Activated B cell treated with CpG ODN at 0.5 μM for 24 hours (primary cell): ENCODE measurements at regions of chr2 and their contacts with region 1.

Region 1: GRCh38 chr2:68715353-68716041 is 19.1 kb upstream of the ARHGAP25 start:
- DNase-seq: no peak
- ATAC-seq: peak; percentile 51
- H3K4me3 Mint-ChIP-seq: peak overlapping the region; percentile 21
- H3K27ac Mint-ChIP-seq: peak overlapping the region; percentile 89
- H3K4me1 Mint-ChIP-seq: peaks cover 82% of the 10 kb centered on the region
- H3K27me3 Mint-ChIP-seq: no peaks in the 10 kb centered on the region
- CTCF ChIP-seq: no peak

Region 2: GRCh38 chr2:68689553-68690537 is 25.7 kb before region 1 on chr2:
- CTCF ChIA-PET with region 1: interaction called, 3 read pairs
- POLR2A ChIA-PET with region 1: interaction called, 6 read pairs
- intact Hi-C with region 1: loop called (anchors 1 kb)
- DNase-seq: no peak
- ATAC-seq: peak; percentile 79
- H3K4me3 Mint-ChIP-seq: peak overlapping the region; percentile 59
- H3K27ac Mint-ChIP-seq: peak overlapping the region; percentile 91
- H3K4me1 Mint-ChIP-seq: peaks cover 40% of the 10 kb centered on the region
- H3K27me3 Mint-ChIP-seq: no peaks in the 10 kb centered on the region
- CTCF ChIP-seq: no peak

Region 3: DNA sequence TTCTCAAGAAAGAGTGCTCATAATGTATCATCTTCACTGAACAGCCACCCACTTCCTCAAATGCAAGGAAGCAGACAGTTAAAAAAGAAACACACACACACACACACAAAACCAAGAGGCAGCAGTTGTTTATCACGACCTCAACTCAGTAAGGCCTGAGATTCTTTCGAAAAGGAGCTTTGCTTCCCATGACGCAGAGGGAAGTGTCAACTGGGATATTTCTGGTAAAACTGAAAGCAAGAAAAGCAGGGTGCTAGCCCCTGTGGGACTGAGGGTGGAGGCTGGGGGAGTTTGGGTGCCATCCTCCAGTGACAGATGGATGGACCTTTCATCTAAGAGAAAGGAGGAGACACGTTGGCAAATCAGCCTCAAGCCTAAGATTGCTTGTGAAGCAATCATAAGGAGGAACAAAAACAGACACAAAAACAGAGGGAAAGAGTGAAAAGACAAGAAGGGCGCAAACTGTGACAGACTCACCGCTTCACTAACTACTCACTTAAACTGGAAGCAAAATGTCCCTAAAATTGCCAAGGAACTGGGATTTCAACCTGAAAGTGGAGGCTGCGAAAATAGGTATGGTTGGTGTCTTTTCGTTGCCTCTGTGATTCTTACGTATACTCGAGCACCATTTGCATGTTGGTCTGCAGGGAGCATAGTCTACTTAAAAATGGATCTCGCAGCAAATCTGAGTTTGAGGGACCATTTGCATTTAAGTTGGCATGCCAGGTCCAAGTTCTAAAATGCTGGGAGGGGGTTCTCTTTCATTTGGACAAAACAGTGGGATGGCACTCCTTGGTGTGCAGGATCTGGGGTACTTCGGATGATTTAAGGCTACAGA is 19.4 kb after region 1 on chr2 and contains the start of gene ARHGAP25:
- CTCF ChIA-PET with region 1: interaction called, 57 read pairs
- POLR2A ChIA-PET with region 1: interaction called, 74 read pairs
- intact Hi-C with region 1: loop called (anchors 1 kb)
- DNase-seq: peak; percentile 45
- ATAC-seq: peak; percentile 74
- H3K4me3 Mint-ChIP-seq: no peak within 1 kb of the TSS
- H3K27ac Mint-ChIP-seq: no peak within 1 kb of the TSS
- H3K4me1 Mint-ChIP-seq: peaks cover 37% of the 10 kb centered on the region
- H3K27me3 Mint-ChIP-seq: no peaks in the 10 kb centered on the region
- CTCF ChIP-seq: no peak
- total RNA-seq, gene ARHGAP25: 324 and 336 TPM in 2 replicates

Region 4: GRCh38 chr2:68766376-68766845 is 50.9 kb after region 1 on chr2:
- CTCF ChIA-PET with region 1: interaction called, 3 read pairs
- POLR2A ChIA-PET with region 1: interaction called, 4 read pairs
- intact Hi-C with region 1: loop called (anchors 1 kb)
- DNase-seq: no peak
- ATAC-seq: peak; percentile 41
- H3K4me3 Mint-ChIP-seq: peak overlapping the region; percentile 67
- H3K27ac Mint-ChIP-seq: peak overlapping the region; percentile 96
- H3K4me1 Mint-ChIP-seq: peaks cover 98% of the 10 kb centered on the region
- H3K27me3 Mint-ChIP-seq: no peaks in the 10 kb centered on the region
- CTCF ChIP-seq: no peak

Region 5: DNA sequence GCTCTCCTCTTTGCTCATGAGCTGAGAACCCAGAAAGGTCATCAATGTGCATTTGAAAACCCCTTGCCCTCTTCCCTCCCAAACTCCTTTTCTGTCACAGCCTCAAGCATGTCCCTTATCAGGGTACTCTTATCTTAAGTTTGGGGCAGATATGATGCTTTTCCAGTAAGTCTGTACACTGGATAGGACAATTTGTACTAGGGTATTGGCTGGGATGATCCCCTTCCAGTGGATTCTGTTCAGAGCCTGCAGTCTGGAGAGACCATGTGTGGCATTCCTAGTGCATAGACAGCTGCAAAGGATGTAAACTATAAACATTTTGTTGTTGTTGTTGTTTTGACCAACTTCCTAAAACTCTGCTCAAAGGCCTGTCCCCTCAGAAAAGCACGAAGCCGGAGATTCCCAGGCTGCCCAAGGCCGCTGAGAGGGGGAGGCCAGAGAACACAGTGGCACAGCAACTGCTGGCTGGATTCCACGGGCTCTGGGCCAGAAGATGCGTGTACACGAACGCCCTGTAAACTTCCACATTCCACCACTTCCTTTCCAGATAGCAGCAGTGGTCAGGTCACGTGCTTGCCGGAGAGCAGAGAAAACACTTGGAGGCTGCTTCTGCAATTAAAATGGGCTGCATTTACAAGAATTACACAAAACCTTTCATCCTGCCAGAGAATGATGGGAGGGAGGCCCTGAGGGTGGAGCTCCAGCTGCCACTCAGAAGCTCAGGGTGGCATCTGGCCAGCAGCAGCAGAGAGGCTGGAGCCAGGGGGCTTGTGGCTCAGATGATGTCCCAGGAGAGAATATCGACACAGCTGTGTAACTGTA is 113.6 kb after region 1 on chr2:
- CTCF ChIA-PET with region 1: no interaction called
- POLR2A ChIA-PET with region 1: no interaction called
- intact Hi-C with region 1: loop called (anchors 2 kb)
- DNase-seq: no peak
- ATAC-seq: peak; percentile 29
- H3K4me3 Mint-ChIP-seq: peak overlapping the region; percentile 8
- H3K27ac Mint-ChIP-seq: peak overlapping the region; percentile 76
- H3K4me1 Mint-ChIP-seq: peaks cover 78% of the 10 kb centered on the region
- H3K27me3 Mint-ChIP-seq: no peaks in the 10 kb centered on the region
- CTCF ChIP-seq: no peak